ENCODE measurements at regions of chr6 and their contacts with region 1.

Region 1: GRCh38 chr6:105733565-105734162 is 330.8 kb upstream of the PREP start:
- DNase-seq: no peak
- H3K4me3 Mint-ChIP-seq: no peak overlapping the region
- H3K27ac Mint-ChIP-seq: no peak overlapping the region
- H3K4me1 Mint-ChIP-seq: peaks cover 17% of the 10 kb centered on the region
- H3K27me3 Mint-ChIP-seq: peaks cover 2% of the 10 kb centered on the region

Region 2: GRCh38 chr6:105431226-105431625 is 302.4 kb before region 1 on chr6:
- intact Hi-C with region 1: loop called (anchors 2 kb)
- DNase-seq: peak; percentile 80
- H3K4me3 Mint-ChIP-seq: no peak overlapping the region
- H3K27ac Mint-ChIP-seq: no peak overlapping the region
- H3K4me1 Mint-ChIP-seq: peaks cover 2% of the 10 kb centered on the region
- H3K27me3 Mint-ChIP-seq: peaks cover 31% of the 10 kb centered on the region

Region 3: DNA sequence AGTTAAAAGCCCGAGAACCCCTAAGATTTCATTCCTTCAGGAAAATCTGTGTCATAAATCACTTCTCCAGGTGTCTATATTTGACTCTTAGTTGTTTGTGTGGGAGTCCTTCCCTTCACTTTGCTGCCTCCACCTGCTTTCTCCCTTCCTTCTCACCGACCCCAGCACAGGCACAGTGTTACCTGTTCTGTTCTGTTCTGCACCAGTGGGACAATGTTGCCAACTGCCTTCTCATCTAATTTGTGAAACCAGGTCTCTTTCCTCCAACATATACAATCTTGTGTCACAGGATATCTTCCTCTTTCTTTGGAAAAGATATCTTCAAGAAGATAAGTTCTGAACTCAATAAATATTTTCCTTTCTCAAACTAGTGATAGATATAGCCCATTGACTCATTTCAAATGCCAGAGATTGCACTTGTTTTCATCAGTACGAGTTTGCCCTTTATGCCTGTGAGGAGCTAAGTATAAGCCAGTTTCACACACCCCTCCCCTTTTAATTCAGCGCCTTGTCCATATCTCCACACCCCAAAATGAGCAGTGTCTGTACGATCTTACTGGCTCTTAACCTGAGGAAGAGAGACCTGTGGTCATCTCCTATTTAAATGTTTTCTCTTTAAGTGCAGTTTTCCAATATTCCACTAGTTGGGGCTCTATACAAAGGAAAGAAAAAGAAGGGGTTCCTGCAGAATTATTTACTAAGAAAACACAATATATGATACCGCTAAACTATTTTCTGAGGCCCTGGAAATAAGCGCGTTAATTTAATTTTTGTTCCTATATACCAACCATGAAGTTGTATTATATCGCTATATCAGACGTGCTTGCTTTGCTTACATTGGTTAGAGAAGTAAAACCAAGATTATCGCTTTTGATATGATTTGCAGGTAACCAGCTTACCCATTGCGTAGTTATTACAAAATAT is 249.2 kb before region 1 on chr6:
- intact Hi-C with region 1: loop called (anchors 2 kb)
- DNase-seq: peak; percentile 63
- H3K4me3 Mint-ChIP-seq: no peak overlapping the region
- H3K27ac Mint-ChIP-seq: peak overlapping the region; percentile 26
- H3K4me1 Mint-ChIP-seq: peaks cover 41% of the 10 kb centered on the region
- H3K27me3 Mint-ChIP-seq: peaks cover 6% of the 10 kb centered on the region

Region 4: DNA sequence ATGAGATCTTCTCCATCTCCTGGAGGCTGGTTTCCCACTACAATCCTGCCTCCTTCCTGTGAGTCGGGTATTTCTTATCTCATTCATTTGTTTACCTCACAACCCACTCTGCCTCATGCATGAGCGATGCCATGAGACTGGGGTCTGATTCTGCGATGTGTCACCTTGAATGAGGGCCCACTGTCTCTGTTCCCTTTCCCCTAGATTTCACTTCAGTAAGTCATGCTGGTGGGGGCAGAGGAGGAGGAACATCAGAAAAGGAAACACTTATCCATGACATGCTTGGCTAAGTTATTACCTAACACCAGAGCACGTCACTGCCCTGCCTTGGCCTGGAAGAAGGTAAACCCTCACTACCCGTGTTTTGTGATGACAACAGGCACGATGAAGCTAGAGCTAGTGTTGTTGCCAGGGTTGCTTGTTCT is 15.1 kb after region 1 on chr6:
- intact Hi-C with region 1: no loop called
- DNase-seq: no peak
- H3K4me3 Mint-ChIP-seq: no peak overlapping the region
- H3K27ac Mint-ChIP-seq: peak overlapping the region; percentile 39
- H3K4me1 Mint-ChIP-seq: peaks cover 44% of the 10 kb centered on the region
- H3K27me3 Mint-ChIP-seq: peaks cover 3% of the 10 kb centered on the region

Region 5: DNA sequence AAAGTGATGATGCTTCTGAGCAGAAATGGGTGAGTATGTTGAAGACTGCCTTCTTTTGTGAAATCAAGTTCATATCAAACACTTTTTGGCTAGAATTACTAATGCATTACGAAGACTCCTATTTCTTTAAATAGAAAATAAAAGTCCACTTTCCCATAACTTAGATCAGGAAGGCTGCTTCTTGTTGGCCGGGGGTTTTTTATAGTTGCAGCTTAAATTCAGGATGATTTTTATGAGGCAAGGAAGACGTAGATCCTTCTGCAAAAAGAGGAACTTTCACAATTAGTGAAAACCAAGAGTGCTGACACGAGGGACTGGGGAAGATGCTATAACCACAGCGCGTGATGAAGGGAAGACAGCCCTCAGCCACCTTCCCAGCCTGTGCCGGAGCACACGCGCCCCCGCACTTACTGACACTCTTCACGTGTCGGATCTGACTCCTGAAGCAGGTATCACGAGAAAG is 146.4 kb after region 1 on chr6:
- intact Hi-C with region 1: loop called (anchors 5 kb)
- DNase-seq: peak; percentile 70
- H3K4me3 Mint-ChIP-seq: peak overlapping the region; percentile 70
- H3K27ac Mint-ChIP-seq: peak overlapping the region; percentile 25
- H3K4me1 Mint-ChIP-seq: peaks cover 39% of the 10 kb centered on the region
- H3K27me3 Mint-ChIP-seq: peaks cover 3% of the 10 kb centered on the region

Region 6: DNA sequence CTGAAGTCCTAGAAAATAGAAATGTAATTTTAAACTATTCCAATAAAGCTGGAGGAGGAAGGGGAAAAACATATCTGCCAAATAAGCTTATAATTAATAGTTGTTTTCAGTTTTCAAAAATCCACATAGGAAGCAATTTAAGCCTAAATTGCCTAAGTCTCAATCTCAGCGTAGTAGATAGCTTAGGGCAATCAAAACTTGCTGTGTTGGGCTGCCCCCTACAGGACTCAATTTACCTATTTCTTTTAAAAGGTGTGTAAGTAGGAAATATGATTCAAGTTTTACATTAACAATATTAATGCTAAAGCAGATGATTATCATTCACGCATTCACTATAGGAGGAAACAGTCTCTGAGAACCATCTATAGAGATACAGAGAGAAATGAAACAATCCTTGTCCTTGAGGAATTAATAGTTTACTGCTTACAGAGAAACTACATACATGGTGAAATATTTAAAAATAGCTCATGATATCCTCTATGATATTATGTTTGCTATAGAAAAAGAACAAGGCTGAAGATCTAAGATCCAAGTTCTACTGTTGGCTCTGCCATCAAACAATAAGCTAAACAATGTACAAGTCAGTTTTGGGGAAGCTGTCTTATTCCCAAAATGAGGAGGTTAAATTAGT is 489.8 kb after region 1 on chr6:
- intact Hi-C with region 1: loop called (anchors 1 kb)
- DNase-seq: peak; percentile 91
- H3K4me3 Mint-ChIP-seq: no peak overlapping the region
- H3K27ac Mint-ChIP-seq: no peak overlapping the region
- H3K4me1 Mint-ChIP-seq: peaks cover 32% of the 10 kb centered on the region
- H3K27me3 Mint-ChIP-seq: no peaks in the 10 kb centered on the region

Region 7: DNA sequence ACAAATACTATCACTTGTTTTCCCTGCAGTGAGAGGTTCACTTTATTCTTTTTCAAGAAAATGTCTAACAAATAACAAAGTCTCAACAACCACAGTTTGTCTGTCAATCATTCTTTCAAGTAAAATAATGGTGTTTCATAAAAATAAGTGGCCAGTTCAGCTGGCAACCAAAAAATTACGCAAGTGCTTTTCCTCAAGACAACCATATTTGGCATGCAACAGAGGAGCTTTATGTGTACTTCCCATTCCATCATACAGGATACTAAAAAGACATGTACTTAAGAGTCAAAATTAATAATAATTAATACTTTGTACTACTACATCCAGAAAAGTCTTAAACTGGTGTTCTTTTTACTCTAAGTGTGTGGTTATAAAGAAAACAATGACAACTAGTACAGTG is 557.3 kb after region 1 on chr6:
- intact Hi-C with region 1: loop called (anchors 10 kb)
- DNase-seq: no peak
- H3K4me3 Mint-ChIP-seq: no peak overlapping the region
- H3K27ac Mint-ChIP-seq: no peak overlapping the region
- H3K4me1 Mint-ChIP-seq: peaks cover 7% of the 10 kb centered on the region
- H3K27me3 Mint-ChIP-seq: no peaks in the 10 kb centered on the region

Measured in activated CD4-positive, alpha-beta T cell treated with anti-CD3 and anti-CD28 coated beads, Interleukin-2, amount 10 ng/mL, durations not matched to agents 24 days and 14 days (primary cell).